ENCODE measurements at regions of chr19 and their contacts with region 1.

Region 1: GRCh38 chr19:12974301-12975220 is 5.2 kb downstream of the DAND5 start:
- DNase-seq: no peak
- H3K4me3 Mint-ChIP-seq: no peak overlapping the region
- H3K27ac Mint-ChIP-seq: no peak overlapping the region
- H3K4me1 Mint-ChIP-seq: peaks cover 2% of the 10 kb centered on the region
- H3K27me3 Mint-ChIP-seq: peaks cover 59% of the 10 kb centered on the region

Region 2: DNA sequence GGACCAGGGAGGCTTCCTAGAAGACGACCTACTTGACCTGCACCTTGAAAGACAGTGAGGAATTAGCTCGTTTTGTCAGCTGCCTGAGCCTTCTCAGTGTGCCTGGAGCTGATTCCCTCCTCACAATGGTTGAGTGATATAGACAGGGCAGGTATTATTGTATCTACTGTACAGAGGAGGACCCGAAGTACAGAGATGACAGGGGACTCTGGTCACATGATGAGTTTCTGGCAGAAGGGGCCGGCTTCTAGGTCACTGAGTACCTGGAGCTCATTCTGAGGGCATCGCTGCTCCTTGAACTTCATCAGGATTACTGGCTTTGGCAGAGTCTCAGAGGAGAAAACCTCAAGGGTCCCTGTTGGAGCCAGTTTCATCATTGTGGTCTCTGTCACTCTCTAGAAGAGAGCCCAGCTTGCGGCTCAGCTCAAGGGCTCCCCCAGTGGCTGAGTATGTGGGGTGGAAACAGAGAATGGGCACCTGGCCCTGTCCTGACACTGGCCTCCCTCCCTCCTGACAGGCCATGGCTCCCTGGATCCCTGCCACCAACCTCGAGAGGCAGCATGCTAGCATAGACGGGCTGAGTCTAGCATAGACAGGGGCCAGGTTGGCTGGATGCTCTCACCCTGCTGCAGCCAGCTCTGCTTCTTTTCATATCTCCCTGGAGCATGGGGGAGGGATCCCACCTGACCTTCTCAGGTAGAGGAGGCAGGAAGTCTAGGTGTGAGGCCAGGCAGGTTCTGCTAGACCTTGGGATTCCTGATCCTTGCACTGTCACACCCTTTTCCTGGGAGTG is 59.5 kb after region 1 on chr19:
- CTCF ChIA-PET with region 1: interaction called, 55 read pairs
- DNase-seq: peak; percentile 63
- H3K4me3 Mint-ChIP-seq: no peak overlapping the region
- H3K27ac Mint-ChIP-seq: no peak overlapping the region
- H3K4me1 Mint-ChIP-seq: no peaks in the 10 kb centered on the region
- H3K27me3 Mint-ChIP-seq: peaks cover 13% of the 10 kb centered on the region

Measured in activated naive CD4-positive, alpha-beta T cell treated with anti-CD3 and anti-CD28 coated beads, Interleukin-2, amount 10 ng/mL, durations not matched to agents 7 days and 5 days (primary cell).